ENCODE measurements at regions of chr5 and their contacts with region 1.

Region 1: DNA sequence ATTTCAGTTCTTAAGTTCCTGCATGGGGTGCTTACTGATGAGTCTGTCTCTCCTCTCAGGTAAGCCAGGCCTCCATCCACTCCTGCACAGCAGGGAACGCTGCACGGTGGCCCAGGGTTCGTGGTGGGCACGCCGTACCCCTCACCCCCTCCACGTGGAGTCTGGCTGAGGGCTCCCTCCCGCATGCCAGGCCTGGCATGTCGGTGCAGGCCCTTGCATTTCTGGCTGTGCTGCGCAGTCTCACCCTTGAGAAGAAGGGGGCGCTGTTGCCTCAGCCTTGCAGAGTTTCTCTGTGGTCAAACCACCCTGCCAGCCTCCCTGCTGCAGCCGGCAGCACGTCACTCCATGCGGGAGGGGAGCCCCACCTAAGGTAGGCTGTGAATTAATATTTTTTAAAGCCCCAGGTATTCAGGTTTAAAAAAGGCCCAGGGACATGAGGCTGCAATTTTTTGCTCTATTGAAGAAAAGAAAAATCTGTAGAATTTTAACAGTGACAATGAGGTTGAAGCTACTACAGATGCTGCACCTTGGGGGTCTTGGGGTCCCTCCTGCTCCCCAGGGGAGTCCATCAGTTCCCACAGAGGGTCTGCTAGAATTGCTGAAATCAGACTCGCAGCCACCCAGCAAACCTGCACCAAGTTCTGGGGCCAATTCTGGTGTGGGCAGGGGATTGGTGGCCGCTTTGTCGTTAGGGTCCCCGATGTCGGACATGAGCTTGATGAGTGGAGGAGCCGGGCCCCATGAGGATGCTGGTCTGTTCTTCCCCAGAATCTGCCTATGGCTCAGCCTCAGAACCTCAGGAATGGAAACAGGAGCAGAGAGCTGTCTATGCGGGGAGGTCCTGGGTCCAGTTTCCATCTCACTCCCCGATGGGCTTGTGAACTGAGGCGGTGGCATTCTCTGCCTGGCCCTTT is 52.6 kb downstream of the TENT4A start:
- DNase-seq: peak; percentile 68 to 86 (median 73)
- ATAC-seq: peak; percentile 53 to 82 (median 71)
- H3K4me3 ChIP-seq: peak overlapping the region in 2 of 12 donors; percentile 15 to 28
- H3K27ac ChIP-seq: peak overlapping the region in 6 of 12 donors; percentile 36 to 82 (median 48)
- H3K4me1 ChIP-seq: peaks cover 0 to 31% (median 9%) of the 10 kb centered on the region in 12 donors
- H3K27me3 ChIP-seq: no peaks in the 10 kb centered on the region
- CTCF ChIP-seq: peak; percentile 60 to 85 (median 74)
- POLR2A ChIP-seq: no peak

Region 2: GRCh38 chr5:7391814-7392692 is 626.2 kb after region 1 on chr5:
- intact Hi-C with region 1: loop called in 6 of 10 experiments (anchors 2 to 10 kb)
- DNase-seq: no peak
- ATAC-seq: peak in 2 of 4 donors; percentile 35 to 54
- H3K4me3 ChIP-seq: no peak overlapping the region
- H3K27ac ChIP-seq: no peak overlapping the region
- H3K4me1 ChIP-seq: peaks cover 0 to 19% (median 0%) of the 10 kb centered on the region in 12 donors
- H3K27me3 ChIP-seq: peaks cover 6 to 30% (median 19%) of the 10 kb centered on the region in 9 donors
- CTCF ChIP-seq: peak in 11 of 12 donors; percentile 10 to 62 (median 47)
- POLR2A ChIP-seq: no peak

Region 3: GRCh38 chr5:7754992-7755596 is 989.2 kb after region 1 on chr5:
- intact Hi-C with region 1: loop called in 1 of 10 experiments (anchors 5 kb)
- DNase-seq: peak in 1 of 5 donors; percentile 13
- ATAC-seq: peak in 1 of 4 donors; percentile 54
- H3K4me3 ChIP-seq: no peak overlapping the region
- H3K27ac ChIP-seq: no peak overlapping the region
- H3K4me1 ChIP-seq: no peaks in the 10 kb centered on the region
- H3K27me3 ChIP-seq: peaks cover 0 to 20% (median 6%) of the 10 kb centered on the region in 9 donors
- CTCF ChIP-seq: peak in 10 of 12 donors; percentile 10 to 58 (median 35)
- POLR2A ChIP-seq: no peak

Region 4: GRCh38 chr5:7827610-7828009 is 1061.7 kb after region 1 on chr5:
- intact Hi-C with region 1: loop called in 1 of 10 experiments (anchors 10 kb)
- DNase-seq: no peak
- ATAC-seq: peak in 2 of 4 donors; percentile 16 to 31
- H3K4me3 ChIP-seq: no peak overlapping the region
- H3K27ac ChIP-seq: no peak overlapping the region
- H3K4me1 ChIP-seq: peaks cover 0 to 3% (median 0%) of the 10 kb centered on the region in 12 donors
- H3K27me3 ChIP-seq: peaks cover 0 to 17% (median 0%) of the 10 kb centered on the region in 9 donors
- CTCF ChIP-seq: peak in 1 of 12 donors; percentile 17
- POLR2A ChIP-seq: no peak

Region 5: DNA sequence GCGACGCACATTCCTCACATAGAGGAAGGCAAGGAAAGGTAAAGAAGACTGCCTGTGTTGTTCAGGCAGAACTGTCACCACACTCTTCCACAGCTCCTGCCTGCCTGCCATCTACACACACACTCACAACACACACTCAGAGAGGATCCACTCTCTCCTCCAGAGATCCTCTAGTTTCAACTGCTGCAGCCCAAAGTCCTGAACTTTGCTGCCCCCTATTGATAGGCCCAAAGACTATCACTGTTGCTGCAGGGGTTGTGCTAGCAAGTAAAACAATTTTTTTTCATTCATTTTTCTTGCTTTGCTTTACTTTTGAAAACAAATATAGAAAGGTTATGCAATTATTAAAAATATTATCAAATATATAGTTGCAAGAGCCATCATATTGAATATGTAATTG is 1091.0 kb after region 1 on chr5:
- intact Hi-C with region 1: loop called in 3 of 10 experiments (anchors 5 to 10 kb)
- DNase-seq: peak in 2 of 5 donors; percentile 8 to 26
- ATAC-seq: peak in 2 of 4 donors; percentile 74 to 81
- H3K4me3 ChIP-seq: no peak overlapping the region
- H3K27ac ChIP-seq: no peak overlapping the region
- H3K4me1 ChIP-seq: peaks cover 0 to 4% (median 0%) of the 10 kb centered on the region in 12 donors
- H3K27me3 ChIP-seq: no peaks in the 10 kb centered on the region
- CTCF ChIP-seq: peak; percentile 41 to 71 (median 62)
- POLR2A ChIP-seq: no peak